Lower leg skin (tissue), 4 donors: ENCODE measurements at regions of chr11 and their contacts with region 1.

Region 1: DNA sequence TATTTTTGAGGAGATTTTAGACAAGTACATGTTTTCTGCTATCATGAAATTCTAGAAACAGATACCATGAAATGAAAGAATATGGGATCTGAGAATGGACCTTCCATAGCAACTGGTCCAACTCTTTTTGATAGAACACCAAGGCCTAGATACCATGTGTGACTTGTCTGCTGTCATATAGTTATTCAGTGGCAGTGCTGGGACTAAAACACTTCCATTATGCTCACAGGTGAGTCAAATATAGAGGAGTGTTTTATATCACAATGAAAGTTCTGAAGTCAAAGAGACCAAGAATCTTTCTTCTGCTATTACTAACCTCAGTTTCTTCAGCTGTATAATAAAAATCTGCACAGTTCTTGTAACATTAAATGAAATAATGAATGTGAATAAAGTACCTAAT is 276.9 kb downstream of the DCDC1 start:
- DNase-seq: no peak
- H3K4me3 ChIP-seq: no peak overlapping the region
- CTCF ChIP-seq: no peak
- POLR2A ChIP-seq: no peak

Region 2: GRCh38 chr11:30921811-30922210 is 170.8 kb before region 1 on chr11:
- intact Hi-C with region 1: no loop called
- DNase-seq: no peak
- H3K4me3 ChIP-seq: no peak overlapping the region
- CTCF ChIP-seq: no peak
- POLR2A ChIP-seq: no peak

Region 3: DNA sequence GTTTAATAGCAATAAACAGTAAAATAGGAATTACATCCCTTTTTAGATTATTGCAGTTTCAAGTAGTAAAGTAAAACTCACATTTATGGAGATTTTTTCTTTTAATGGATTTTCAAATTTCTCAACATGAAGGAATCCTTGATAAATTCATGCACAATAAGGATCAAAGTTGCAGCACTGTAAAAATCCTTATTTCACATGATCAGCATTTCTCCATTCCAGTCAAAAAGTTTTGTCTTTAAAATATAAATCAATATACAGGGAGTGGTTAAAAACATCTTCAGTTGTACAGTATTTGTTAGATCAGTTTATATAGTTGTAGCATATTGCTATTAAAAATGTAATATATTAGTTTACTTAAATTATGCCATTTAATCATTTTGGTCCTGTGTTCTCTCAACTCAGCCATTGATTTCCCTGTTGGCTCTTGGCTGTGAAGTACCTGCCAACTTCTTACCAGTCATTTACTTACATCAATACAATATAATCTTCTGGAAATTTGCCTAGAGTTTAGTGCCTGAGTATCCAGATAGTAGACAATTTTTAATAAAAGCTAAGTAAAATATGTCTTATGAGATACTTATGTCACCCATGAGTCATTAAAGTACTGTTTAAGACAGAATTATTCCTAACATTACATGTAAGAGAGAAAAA is 429.0 kb after region 1 on chr11:
- intact Hi-C with region 1: loop called (anchors 5 kb)
- DNase-seq: no peak
- H3K4me3 ChIP-seq: no peak overlapping the region
- CTCF ChIP-seq: no peak
- POLR2A ChIP-seq: no peak